Activated naive CD8-positive, alpha-beta T cell treated with anti-CD3 and anti-CD28 coated beads, Interleukin-2, amount 10 ng/mL, durations not matched to agents 7 days and 5 days (primary cell): ENCODE measurements at regions of chr14 and their contacts with region 1.

Region 1: DNA sequence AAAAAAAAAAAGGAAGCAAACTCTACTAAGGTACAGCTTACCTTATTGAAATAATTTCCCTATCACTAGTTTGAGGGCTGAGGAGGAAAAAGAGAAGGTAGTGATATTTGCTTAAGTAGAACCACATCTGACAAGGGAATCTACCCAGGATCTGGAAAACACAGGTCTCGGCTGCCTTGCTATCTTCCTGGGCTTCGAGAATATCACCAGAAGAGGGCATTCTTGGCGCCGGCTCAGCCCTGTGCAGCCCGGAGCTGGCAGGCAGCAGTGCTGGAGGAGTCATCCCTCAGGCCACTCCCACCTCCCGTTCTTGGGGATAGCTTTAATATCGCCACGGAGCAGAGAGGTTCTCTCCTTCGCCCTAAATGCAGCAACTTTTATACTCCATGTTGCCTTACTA is 1181.2 kb downstream of the VRK1 start:
- DNase-seq: peak; percentile 74
- ATAC-seq: peak; percentile 86
- H3K4me3 Mint-ChIP-seq: peak overlapping the region; percentile 82
- H3K27ac Mint-ChIP-seq: peak overlapping the region; percentile 90
- H3K4me1 Mint-ChIP-seq: peaks cover 50% of the 10 kb centered on the region
- H3K27me3 Mint-ChIP-seq: no peaks in the 10 kb centered on the region

Region 2: GRCh38 chr14:97707603-97708002 is 270.7 kb before region 1 on chr14:
- POLR2A ChIA-PET with region 1: interaction called, 12 read pairs
- DNase-seq: peak; percentile 43
- ATAC-seq: peak; percentile 51
- H3K4me3 Mint-ChIP-seq: peak overlapping the region; percentile 85
- H3K27ac Mint-ChIP-seq: peak overlapping the region; percentile 97
- H3K4me1 Mint-ChIP-seq: peaks cover 83% of the 10 kb centered on the region
- H3K27me3 Mint-ChIP-seq: no peaks in the 10 kb centered on the region

Region 3: DNA sequence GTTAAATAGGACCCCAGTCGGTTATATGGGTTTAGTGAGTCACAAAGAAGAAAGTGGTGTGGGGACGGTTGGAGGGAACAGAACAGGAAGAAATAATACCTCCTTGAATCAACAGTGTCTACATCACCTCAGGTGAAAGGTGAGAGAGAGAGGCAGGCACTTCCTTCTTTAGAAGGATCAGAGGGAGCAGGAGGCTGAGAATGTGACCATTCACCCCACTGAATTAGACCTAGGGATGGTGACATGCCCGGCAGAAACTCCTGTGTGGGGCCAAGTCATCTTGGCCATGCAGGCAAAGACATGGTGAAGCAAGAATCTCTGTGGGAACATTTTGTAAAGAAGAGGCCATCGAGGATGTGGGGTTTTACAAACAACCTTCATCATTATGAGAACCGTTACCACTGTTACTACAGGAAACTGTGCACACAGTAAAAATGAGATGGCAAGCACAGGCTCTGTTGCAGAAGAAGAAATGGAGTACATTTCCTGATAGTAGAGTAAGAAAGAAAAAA is 15.7 kb after region 1 on chr14:
- POLR2A ChIA-PET with region 1: interaction called, 14 read pairs
- DNase-seq: peak; percentile 52
- ATAC-seq: peak; percentile 82
- H3K4me3 Mint-ChIP-seq: peak overlapping the region; percentile 52
- H3K27ac Mint-ChIP-seq: peak overlapping the region; percentile 91
- H3K4me1 Mint-ChIP-seq: peaks cover 39% of the 10 kb centered on the region
- H3K27me3 Mint-ChIP-seq: no peaks in the 10 kb centered on the region

Region 4: DNA sequence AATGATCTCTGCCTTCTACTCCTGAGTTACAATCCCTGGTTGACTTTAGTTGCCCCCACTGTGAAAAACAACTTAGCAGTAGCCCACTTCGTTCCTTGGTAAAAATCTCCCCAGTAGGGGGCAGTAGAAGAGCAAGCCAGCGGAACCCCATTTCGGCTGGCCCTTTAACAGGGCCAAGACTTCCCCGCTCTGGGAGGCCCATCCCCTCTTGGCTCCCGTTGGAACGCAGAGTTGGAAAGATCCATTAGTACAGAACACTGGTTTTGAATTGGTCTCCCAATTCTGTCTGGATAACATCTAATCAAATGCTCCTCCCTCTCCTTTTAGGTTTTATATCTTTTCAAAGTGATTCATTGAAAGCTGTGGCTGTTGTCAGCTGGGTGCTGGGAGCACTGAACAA is 160.3 kb after region 1 on chr14:
- POLR2A ChIA-PET with region 1: interaction called, 76 read pairs
- DNase-seq: peak; percentile 59
- ATAC-seq: peak; percentile 55
- H3K4me3 Mint-ChIP-seq: peak overlapping the region; percentile 79
- H3K27ac Mint-ChIP-seq: peak overlapping the region; percentile 94
- H3K4me1 Mint-ChIP-seq: peaks cover 68% of the 10 kb centered on the region
- H3K27me3 Mint-ChIP-seq: no peaks in the 10 kb centered on the region

Region 5: GRCh38 chr14:99271951-99272631 is 1293.8 kb after region 1 on chr14 and contains the start of gene BCL11B:
- POLR2A ChIA-PET with region 1: interaction called, 14 read pairs
- DNase-seq: peak; percentile 87
- ATAC-seq: peak; percentile 77
- H3K4me3 Mint-ChIP-seq: peak within 1 kb of the TSS; percentile 98
- H3K27ac Mint-ChIP-seq: peak within 1 kb of the TSS; percentile 99
- H3K4me1 Mint-ChIP-seq: peaks cover 26% of the 10 kb centered on the region
- H3K27me3 Mint-ChIP-seq: peaks cover 16% of the 10 kb centered on the region
- total RNA-seq, gene BCL11B: 99.5 to 104 TPM